OCI-LY7 (cell line): ENCODE measurements at regions of chr15 and their contacts with region 1.

Region 1: DNA sequence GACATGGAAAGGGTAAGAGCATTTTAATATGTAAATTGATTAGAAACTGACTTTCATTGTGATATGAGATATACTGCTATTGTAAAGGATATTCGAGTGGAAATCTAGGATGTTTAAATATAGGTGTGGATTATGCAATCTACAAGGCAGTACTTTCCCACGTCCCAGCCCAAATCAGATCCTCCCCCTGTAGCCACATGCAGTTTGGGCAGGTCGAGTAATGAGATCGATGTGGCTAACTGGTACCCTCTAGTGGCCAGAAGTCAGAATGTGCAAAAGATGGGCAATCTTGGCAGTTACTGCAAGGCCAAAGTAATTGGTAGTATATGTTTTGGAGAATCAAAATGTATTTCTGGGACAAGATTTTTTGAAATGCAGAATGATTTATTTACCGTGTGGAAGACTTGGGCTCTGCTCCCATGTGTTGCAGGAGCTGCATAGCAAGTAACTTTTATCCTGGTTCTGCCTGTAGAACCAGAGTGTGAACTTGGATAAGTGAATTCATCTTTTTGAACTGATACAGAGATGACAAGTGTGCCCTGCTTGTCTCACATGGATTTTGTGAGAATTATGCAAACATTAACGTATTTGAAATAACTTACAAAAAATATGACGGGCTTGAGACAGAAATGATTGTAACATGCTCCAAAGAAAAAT is 94.5 kb upstream of the ADAMTSL3 start:
- DNase-seq: peak; percentile 58
- H3K4me3 ChIP-seq: no peak overlapping the region
- H3K27ac ChIP-seq: no peak overlapping the region
- H3K4me1 ChIP-seq: no peaks in the 10 kb centered on the region
- CTCF ChIP-seq: peak; percentile 91

Region 2: DNA sequence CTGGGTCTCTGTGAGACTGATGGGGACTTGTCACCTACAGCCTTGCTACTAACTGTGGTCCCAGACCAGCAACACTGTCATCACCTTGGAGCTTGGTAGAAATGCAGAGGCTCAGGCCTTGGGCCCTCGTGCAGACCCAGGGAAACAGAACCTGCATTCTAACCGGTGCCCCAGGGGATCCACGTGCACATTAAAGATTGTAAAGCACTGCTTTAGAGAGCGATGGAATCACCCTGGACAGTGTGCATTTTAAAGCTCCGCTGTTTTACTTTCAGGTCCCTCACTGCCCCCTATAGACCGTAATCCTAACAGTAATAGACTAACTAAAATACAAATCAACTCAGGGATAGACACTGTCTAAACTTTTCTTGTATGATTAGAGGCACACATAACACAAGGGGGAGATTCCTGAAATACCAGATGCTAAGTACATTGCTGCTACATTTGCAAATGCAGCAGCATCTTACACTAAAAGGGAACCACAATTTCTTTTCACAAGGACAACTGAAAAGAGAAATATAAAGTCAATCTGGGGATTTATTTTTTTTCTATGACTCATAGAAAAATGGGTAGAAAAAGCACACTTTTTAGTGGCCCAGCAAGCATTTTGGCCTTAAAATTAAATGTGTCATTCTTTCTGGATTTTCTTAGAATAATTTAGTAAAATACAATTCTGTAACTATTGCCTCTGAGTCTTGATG is 122.8 kb before region 1 on chr15:
- CTCF ChIA-PET with region 1: interaction called, 3 read pairs
- POLR2A ChIA-PET with region 1: no interaction called
- intact Hi-C with region 1: loop called (anchors 1 kb)
- DNase-seq: peak; percentile 2
- H3K4me3 ChIP-seq: no peak overlapping the region
- H3K27ac ChIP-seq: no peak overlapping the region
- H3K4me1 ChIP-seq: no peaks in the 10 kb centered on the region
- CTCF ChIP-seq: peak; percentile 68